OCI-LY7 (cell line): ENCODE measurements at regions of chr19 and their contacts with region 1.

Region 1: GRCh38 chr19:6501740-6502648 is at the start of gene TUBB4A:
- DNase-seq: peak; percentile 84
- H3K4me3 ChIP-seq: peak within 1 kb of the TSS; percentile 74
- H3K27ac ChIP-seq: peak within 1 kb of the TSS; percentile 44
- H3K4me1 ChIP-seq: peaks cover 41% of the 10 kb centered on the region
- CTCF ChIP-seq: no peak
- total RNA-seq, gene TUBB4A: 9.7 and 14.4 TPM in 2 replicates

Region 2: GRCh38 chr19:6393074-6393983 is 108.7 kb before region 1 on chr19 and contains the start of gene GTF2F1:
- CTCF ChIA-PET with region 1: no interaction called
- POLR2A ChIA-PET with region 1: no interaction called
- intact Hi-C with region 1: loop called (anchors 10 kb)
- DNase-seq: peak; percentile 96
- H3K4me3 ChIP-seq: peak within 1 kb of the TSS; percentile 81
- H3K27ac ChIP-seq: peak within 1 kb of the TSS; percentile 44
- H3K4me1 ChIP-seq: peaks cover 14% of the 10 kb centered on the region
- CTCF ChIP-seq: peak; percentile 50
- total RNA-seq, gene GTF2F1: 31.1 and 44.4 TPM in 2 replicates

Region 3: GRCh38 chr19:6481541-6482342 is 20.3 kb before region 1 on chr19 and contains the start of gene DENND1C:
- CTCF ChIA-PET with region 1: no interaction called
- POLR2A ChIA-PET with region 1: interaction called, 4 read pairs
- intact Hi-C with region 1: loop called (anchors 2 kb)
- DNase-seq: peak; percentile 88
- H3K4me3 ChIP-seq: peak within 1 kb of the TSS; percentile 82
- H3K27ac ChIP-seq: peak within 1 kb of the TSS; percentile 67
- H3K4me1 ChIP-seq: peaks cover 38% of the 10 kb centered on the region
- CTCF ChIP-seq: peak; percentile 67
- total RNA-seq, gene DENND1C: 40.9 and 41.8 TPM in 2 replicates